ENCODE measurements at regions of chr22 and their contacts with region 1.

Region 1: DNA sequence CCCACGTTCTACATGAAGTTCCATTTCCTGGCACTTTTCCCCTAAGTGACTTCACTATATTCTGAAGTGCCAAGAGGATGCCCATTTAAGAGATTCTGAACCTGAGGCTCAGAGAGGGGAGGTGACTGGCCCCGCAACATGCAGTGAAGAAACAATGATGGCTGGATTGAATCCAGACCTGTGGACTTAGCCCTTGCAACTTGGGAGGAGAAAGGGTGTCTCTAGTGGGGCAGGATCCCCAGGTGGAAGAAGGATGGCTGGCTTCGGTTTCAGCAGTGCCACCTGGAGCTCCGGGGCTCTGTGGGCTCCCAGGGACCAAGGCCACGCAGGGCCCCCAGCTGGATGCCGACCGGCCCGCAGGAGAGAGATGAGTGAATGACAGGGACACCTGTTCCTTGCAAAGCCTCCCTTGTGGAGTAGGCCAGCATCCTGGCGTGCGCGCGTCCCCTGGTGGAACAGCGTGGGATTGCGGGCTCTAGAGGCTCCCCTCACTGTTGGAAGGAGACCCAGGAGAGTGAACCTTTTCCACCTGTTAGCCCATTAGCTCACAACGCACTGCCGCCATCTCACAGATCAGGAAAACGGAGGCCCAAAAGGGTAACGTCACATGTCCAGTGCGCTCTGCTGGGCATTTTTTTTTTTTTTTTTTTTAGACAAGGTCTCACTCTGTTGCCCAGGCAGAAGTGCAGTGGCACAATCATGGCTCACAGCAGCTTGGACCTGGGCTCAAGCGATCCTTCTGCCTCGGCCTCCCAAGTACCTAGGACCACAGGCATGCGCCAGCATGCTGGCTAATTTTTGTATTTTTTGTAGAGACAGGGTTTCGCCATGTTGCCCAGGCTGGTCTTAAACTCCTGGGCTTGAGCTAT is 104.7 kb downstream of the KIAA1671 start:
- DNase-seq: peak; percentile 88
- H3K4me3 Mint-ChIP-seq: no peak overlapping the region
- H3K27ac Mint-ChIP-seq: no peak overlapping the region
- H3K4me1 Mint-ChIP-seq: peaks cover 49% of the 10 kb centered on the region
- H3K27me3 Mint-ChIP-seq: no peaks in the 10 kb centered on the region

Region 2: GRCh38 chr22:24516301-24516737 is 540.9 kb before region 1 on chr22:
- CTCF ChIA-PET with region 1: no interaction called
- DNase-seq: no peak
- H3K4me3 Mint-ChIP-seq: no peak overlapping the region
- H3K27ac Mint-ChIP-seq: no peak overlapping the region
- H3K4me1 Mint-ChIP-seq: peaks cover 11% of the 10 kb centered on the region
- H3K27me3 Mint-ChIP-seq: peaks cover 55% of the 10 kb centered on the region

Region 3: GRCh38 chr22:24938741-24939341 is 118.4 kb before region 1 on chr22:
- CTCF ChIA-PET with region 1: interaction called, 88 read pairs
- DNase-seq: peak; percentile 53
- H3K4me3 Mint-ChIP-seq: no peak overlapping the region
- H3K27ac Mint-ChIP-seq: no peak overlapping the region
- H3K4me1 Mint-ChIP-seq: no peaks in the 10 kb centered on the region
- H3K27me3 Mint-ChIP-seq: peaks cover 8% of the 10 kb centered on the region

Region 4: DNA sequence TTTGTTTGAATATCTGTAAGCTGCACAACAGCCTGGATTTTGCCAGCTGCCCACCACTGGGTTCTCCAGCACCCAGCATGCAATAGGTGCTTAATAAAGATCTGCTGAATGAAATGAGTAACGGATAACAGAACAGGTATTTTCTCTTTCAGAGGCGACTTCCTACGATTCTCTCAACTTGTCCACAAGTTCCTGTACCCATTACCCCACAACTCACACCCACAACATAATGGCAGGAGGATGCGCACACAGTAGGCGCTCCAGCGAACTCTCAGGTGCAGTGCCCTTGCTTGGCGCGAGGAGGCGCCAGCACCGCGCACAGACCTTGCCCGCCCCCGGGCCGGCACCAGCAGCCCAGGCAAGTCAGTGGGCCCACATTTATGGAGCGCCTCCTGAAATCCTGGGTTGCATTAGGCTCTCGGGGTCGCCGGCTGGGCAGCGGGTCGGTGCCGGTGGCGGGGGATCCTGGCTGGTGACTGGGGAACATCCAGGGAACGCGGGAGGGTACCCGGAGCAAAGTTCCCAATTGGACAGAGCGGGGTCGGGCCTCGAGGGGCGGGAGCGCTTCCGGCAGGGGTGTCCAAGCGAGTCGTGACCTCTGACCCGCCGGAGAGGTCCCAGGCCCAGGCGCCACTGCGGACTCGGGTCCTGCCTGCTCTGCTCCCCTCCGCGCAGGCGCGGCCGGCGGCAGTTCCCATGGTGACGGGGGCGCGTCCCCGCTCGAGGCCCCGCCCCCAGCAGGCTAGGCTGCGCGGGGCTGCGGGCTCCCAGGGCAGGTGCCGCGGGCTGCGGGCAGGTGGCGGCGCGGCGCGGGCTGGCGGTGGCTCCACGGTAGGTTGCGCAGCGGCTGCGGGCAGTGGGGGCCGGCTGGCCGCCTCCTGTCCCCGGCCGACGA is 105.1 kb before region 1 on chr22 and contains the start of gene KIAA1671:
- CTCF ChIA-PET with region 1: interaction called, 115 read pairs
- DNase-seq: peak; percentile 90
- H3K4me3 Mint-ChIP-seq: peak within 1 kb of the TSS; percentile 76
- H3K27ac Mint-ChIP-seq: peak within 1 kb of the TSS; percentile 47
- H3K4me1 Mint-ChIP-seq: peaks cover 33% of the 10 kb centered on the region
- H3K27me3 Mint-ChIP-seq: peaks cover 75% of the 10 kb centered on the region

Region 5: DNA sequence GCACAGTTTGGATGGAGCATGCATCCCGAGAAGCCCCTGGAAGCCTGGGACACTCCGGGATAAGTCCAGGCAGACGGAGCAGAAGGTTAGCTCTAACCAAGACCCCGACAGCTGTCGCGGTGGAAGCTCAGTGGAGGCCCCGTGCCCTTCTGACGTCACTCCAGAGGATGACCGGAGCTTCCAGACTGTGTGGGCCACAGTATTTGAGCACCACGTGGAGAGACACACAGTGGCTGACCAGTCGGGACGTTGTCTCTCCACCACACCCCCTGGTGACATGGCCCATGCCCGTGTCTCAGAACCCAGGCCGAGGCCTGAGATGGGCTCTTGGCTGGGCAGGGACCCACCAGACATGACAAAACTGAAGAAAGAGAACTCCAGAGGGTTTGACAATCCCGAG is 18.5 kb before region 1 on chr22:
- CTCF ChIA-PET with region 1: no interaction called
- DNase-seq: no peak
- H3K4me3 Mint-ChIP-seq: no peak overlapping the region
- H3K27ac Mint-ChIP-seq: no peak overlapping the region
- H3K4me1 Mint-ChIP-seq: no peaks in the 10 kb centered on the region
- H3K27me3 Mint-ChIP-seq: no peaks in the 10 kb centered on the region

Region 6: GRCh38 chr22:25067851-25068421 is 10.7 kb after region 1 on chr22:
- CTCF ChIA-PET with region 1: interaction called, 68 read pairs
- DNase-seq: peak; percentile 95
- H3K4me3 Mint-ChIP-seq: peak overlapping the region; percentile 76
- H3K27ac Mint-ChIP-seq: peak overlapping the region; percentile 100
- H3K4me1 Mint-ChIP-seq: peaks cover 99% of the 10 kb centered on the region
- H3K27me3 Mint-ChIP-seq: no peaks in the 10 kb centered on the region

Region 7: GRCh38 chr22:25076336-25076735 is 19.1 kb after region 1 on chr22:
- CTCF ChIA-PET with region 1: interaction called, 68 read pairs
- DNase-seq: peak; percentile 38
- H3K4me3 Mint-ChIP-seq: peak overlapping the region; percentile 27
- H3K27ac Mint-ChIP-seq: peak overlapping the region; percentile 61
- H3K4me1 Mint-ChIP-seq: peaks cover 62% of the 10 kb centered on the region
- H3K27me3 Mint-ChIP-seq: no peaks in the 10 kb centered on the region

Region 8: DNA sequence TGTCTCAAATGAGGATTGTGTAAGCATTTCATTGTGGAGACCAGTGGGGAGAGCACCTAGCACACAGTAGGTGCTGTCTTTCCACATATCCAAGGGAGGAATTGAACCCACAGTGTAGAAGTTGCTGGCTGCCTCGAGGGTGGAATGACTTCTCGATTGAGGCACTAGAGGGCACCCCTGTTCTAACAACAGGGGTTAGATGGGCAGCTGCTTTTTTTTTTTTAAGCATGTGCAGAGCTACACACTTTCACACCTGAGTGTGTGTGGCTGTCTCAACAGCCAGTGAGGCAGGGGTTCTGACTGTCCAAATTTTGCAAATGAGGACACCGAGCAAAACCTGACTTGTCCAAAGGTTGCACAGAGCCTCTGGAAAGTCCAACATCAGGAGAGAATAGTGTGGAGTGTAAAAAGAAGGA is 24.2 kb after region 1 on chr22:
- CTCF ChIA-PET with region 1: interaction called, 16 read pairs
- DNase-seq: peak; percentile 74
- H3K4me3 Mint-ChIP-seq: no peak overlapping the region
- H3K27ac Mint-ChIP-seq: no peak overlapping the region
- H3K4me1 Mint-ChIP-seq: peaks cover 59% of the 10 kb centered on the region
- H3K27me3 Mint-ChIP-seq: no peaks in the 10 kb centered on the region